ENCODE measurements at regions of chr7 and their contacts with region 1.

Region 1: GRCh38 chr7:79842682-79843081 is 291.9 kb upstream of the GNAI1 start:
- DNase-seq: no peak
- ATAC-seq: no peak
- H3K4me3 Mint-ChIP-seq: no peak overlapping the region
- H3K27ac Mint-ChIP-seq: no peak overlapping the region
- H3K4me1 Mint-ChIP-seq: no peaks in the 10 kb centered on the region
- H3K27me3 Mint-ChIP-seq: no peaks in the 10 kb centered on the region
- CTCF ChIP-seq: no peak

Region 2: GRCh38 chr7:79564123-79564522 is 278.6 kb before region 1 on chr7:
- CTCF ChIA-PET with region 1: no interaction called
- POLR2A ChIA-PET with region 1: no interaction called
- intact Hi-C with region 1: no loop called
- DNase-seq: no peak
- ATAC-seq: no peak
- H3K4me3 Mint-ChIP-seq: no peak overlapping the region
- H3K27ac Mint-ChIP-seq: no peak overlapping the region
- H3K4me1 Mint-ChIP-seq: no peaks in the 10 kb centered on the region
- H3K27me3 Mint-ChIP-seq: no peaks in the 10 kb centered on the region
- CTCF ChIP-seq: no peak

Region 3: GRCh38 chr7:79882916-79883315 is 40.2 kb after region 1 on chr7:
- CTCF ChIA-PET with region 1: no interaction called
- POLR2A ChIA-PET with region 1: interaction called, 17 read pairs
- intact Hi-C with region 1: no loop called
- DNase-seq: no peak
- ATAC-seq: no peak
- H3K4me3 Mint-ChIP-seq: no peak overlapping the region
- H3K27ac Mint-ChIP-seq: no peak overlapping the region
- H3K4me1 Mint-ChIP-seq: no peaks in the 10 kb centered on the region
- H3K27me3 Mint-ChIP-seq: no peaks in the 10 kb centered on the region
- CTCF ChIP-seq: no peak